ENCODE measurements at regions of chr1 and their contacts with region 1.

Region 1: DNA sequence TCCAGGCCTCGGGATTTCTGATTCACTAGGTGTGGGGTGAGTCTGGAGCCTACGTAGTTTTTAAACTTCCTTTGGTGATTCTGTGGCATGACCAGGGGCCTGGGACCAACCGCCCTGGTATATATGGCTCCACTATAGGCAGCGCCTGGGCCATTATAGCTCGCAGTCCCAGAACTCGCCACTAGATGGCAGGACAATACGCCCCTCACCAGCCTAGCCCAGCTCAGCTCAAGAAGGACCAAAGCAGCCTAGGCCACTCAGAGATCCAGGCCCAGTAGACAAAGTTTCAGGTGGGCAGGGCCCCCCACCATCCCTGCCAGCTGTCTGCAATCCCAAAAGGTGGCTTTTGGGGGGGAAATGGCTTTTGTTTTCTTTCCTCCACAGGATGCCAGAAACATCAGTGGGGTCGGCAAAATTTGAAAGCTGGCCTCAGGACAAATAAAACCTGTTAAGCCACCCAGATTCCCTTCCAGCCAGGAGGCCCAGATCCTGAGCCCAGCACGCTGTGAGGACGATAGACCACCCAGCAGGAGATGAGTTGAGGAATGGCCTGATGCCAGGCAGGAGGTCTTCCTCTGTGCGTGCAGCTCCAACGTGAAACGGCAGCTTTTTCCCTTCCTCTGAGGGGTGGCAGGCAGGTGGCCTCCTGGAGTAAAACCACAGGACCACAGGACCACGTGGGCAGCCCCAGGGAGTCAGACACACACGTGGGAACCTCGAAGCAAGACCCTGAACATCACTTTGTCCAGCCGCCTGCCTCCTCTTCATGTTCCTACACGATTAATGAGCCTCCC is 24.8 kb upstream of the TMEM51 start:
- DNase-seq: no peak

Region 2: GRCh38 chr1:14777516-14778506 is 350.9 kb before region 1 on chr1:
- intact Hi-C with region 1: no loop called
- DNase-seq: no peak

Region 3: GRCh38 chr1:14945132-14946016 is 183.3 kb before region 1 on chr1:
- intact Hi-C with region 1: no loop called
- DNase-seq: no peak

Region 4: GRCh38 chr1:15272009-15272788 is 143.5 kb after region 1 on chr1:
- intact Hi-C with region 1: loop called (anchors 1 kb)
- DNase-seq: no peak

Region 5: DNA sequence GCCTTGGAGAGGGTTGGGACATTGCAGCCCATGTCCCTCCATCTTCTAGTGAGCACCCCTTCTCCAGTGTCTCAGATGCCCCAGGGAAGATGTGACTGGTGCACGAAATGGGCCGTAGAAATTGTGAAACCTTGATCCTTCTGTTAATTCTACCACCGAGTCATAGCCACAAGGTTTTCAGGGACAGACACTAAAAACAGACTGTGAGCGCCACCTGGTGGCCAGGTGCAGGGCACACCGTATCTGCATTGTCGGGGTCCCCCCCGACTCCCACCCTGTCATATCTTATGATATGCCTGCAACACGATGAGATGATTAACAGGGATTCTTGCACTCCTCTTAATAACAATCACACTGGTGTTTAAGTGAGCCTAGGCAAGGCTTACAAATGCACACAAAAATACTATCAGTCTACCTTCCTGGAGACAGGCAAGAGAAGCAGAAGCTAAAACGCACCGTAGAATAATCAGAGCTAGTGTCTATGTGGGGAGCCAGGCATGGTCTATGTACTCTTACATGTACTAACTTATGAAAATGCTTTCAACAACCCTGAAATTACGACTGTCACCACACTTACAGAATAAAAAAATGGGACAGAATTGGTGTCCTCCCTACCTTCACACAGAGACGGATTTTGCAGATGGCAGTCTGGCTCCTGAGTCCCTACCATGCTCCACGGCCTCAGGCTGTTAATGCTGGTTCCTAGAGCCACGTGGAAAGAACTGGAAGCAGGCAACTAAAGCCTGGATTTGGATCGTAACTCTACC is 176.2 kb after region 1 on chr1:
- intact Hi-C with region 1: loop called (anchors 1 kb)
- DNase-seq: no peak

Region 6: DNA sequence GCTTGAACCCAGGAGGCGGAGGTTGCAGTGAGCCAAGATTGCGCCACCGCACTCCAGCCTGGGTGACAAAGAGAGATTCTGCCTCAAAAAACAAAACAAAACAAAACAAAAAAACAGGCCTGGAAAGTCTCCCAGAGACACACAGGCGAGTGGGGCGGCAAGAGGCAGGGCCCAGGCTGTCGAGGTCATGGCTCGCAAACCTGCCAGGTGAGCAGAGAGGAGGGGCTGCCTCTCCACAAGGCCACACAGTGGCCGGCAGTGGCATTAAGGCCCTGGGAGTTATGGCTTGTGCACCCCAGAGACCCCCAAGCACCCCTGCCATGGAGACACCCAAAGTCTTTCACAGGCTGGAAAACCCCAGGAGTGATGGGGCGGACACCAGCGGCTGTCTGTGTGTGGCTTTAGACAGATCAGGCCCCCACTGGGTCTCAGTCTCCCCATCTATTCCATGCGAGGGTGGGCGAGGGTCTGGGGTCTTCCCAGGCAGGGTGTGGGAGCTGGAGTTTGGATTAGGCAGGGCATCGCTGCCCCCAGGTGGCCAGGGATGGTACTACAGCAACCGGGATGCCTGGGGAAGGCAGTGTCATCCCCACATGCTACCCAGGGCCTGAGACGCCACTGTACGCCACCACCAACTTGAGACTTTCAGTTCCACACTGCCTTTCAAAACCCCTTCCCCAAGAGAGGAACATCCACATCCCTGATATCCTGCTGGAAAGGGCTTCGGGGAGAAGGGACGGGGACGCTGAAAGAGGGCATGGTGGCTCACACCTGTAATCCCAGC is 302.3 kb after region 1 on chr1:
- intact Hi-C with region 1: loop called (anchors 5 kb)
- DNase-seq: peak; percentile 88

Measured in cardiac septum (tissue), 1 donor.